Activated CD4-positive, alpha-beta memory T cell treated with anti-CD3 and anti-CD28 coated beads, Interleukin-2, amount 10 ng/mL, durations not matched to agents 7 days and 5 days (primary cell): ENCODE measurements at regions of chr18 and their contacts with region 1.

Region 1: DNA sequence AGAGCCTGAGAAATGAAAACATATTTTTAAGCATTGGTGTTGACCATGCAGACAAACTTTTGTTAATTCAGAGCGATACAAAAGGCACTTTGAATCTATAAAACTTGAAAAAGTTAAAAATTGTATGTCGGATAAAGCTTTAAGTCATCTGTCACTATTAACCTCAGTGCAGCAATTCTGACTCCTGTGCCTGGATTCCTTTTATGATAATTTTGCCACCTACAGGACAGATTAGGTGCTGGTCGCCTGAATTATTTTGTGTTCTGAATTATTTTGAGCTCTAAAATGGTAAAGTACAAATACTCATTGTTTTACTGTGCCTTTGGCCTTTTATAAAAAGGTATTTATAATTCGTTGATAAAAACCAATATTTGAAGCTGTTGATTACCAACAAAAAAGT is 19.4 kb upstream of the RNF138 start:
- DNase-seq: no peak
- H3K4me3 Mint-ChIP-seq: no peak overlapping the region
- H3K27ac Mint-ChIP-seq: no peak overlapping the region
- H3K4me1 Mint-ChIP-seq: peaks cover 22% of the 10 kb centered on the region
- H3K27me3 Mint-ChIP-seq: no peaks in the 10 kb centered on the region

Region 2: DNA sequence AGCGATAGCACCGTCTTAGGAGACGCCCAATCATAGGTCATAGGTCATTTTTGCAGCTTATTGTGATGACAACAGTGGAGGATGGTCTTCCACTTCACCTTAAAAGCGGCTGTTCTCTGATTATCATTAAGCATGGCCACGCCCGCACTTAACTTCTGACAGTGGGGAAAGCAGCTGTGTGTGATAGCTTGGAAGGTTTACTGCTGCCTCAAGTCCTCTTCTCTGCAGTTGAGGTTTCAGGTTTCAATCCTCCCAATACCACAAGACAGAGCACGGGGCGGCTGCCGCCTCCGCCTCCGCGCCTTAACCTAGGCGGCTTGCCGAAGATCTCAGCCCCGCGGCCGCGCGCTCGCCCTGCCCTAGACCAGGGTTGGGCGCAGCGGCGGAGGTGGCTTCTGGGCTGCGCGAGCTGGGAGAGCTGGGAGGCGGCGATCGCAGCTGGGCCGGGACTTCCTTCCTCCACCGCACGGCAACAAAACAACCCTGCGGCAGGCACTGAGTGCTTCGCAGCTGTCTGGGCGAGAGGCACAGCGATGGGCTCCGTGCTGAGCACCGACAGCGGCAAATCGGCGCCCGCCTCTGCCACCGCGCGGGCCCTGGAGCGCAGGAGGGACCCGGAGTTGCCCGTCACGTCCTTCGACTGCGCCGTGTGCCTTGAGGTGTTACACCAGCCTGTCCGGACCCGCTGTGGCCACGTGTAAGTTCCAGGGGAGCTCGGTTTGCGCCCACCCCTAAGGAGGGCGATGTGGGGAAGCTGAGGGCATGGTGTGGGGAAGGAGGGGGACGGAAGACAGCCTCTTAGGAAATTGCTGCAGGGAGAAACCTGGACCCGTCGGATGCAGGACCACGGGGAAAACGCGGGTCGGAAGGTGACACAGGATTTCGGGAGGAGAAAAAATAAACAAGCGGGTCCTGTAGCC is 53.7 kb before region 1 on chr18 and contains the start of gene RNF125:
- CTCF ChIA-PET with region 1: interaction called, 42 read pairs
- POLR2A ChIA-PET with region 1: interaction called, 43 read pairs
- DNase-seq: peak; percentile 94
- H3K4me3 Mint-ChIP-seq: peak within 1 kb of the TSS; percentile 90
- H3K27ac Mint-ChIP-seq: peak within 1 kb of the TSS; percentile 99
- H3K4me1 Mint-ChIP-seq: peaks cover 53% of the 10 kb centered on the region
- H3K27me3 Mint-ChIP-seq: no peaks in the 10 kb centered on the region
- total RNA-seq, gene RNF125: 43.8 to 48.4 TPM

Region 3: DNA sequence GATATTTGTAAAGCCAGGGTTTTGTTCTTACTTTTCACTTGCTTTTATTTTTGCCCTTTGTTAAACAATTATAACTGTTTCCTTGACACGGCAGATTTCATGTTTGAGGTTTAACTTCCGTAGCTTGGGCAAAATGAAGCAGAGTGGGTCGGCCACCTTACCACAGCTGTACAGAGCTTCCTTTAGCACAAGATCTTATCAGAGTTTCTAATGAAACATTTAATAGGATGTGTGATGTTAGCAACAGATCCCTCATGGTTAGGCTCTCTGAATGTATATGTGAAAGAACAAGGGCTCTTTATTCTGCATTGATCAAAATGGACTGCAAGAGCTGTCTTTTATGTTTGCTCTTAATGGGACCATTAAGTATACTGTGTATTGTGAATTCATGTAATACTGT is 31.4 kb before region 1 on chr18:
- CTCF ChIA-PET with region 1: interaction called, 10 read pairs
- POLR2A ChIA-PET with region 1: interaction called, 6 read pairs
- DNase-seq: peak; percentile 79
- H3K4me3 Mint-ChIP-seq: peak overlapping the region; percentile 55
- H3K27ac Mint-ChIP-seq: peak overlapping the region; percentile 96
- H3K4me1 Mint-ChIP-seq: peaks cover 67% of the 10 kb centered on the region
- H3K27me3 Mint-ChIP-seq: no peaks in the 10 kb centered on the region

Region 4: GRCh38 chr18:32060026-32060425 is 12.3 kb before region 1 on chr18:
- CTCF ChIA-PET with region 1: interaction called, 19 read pairs
- POLR2A ChIA-PET with region 1: interaction called, 5 read pairs
- DNase-seq: no peak
- H3K4me3 Mint-ChIP-seq: no peak overlapping the region
- H3K27ac Mint-ChIP-seq: no peak overlapping the region
- H3K4me1 Mint-ChIP-seq: peaks cover 40% of the 10 kb centered on the region
- H3K27me3 Mint-ChIP-seq: no peaks in the 10 kb centered on the region

Region 5: DNA sequence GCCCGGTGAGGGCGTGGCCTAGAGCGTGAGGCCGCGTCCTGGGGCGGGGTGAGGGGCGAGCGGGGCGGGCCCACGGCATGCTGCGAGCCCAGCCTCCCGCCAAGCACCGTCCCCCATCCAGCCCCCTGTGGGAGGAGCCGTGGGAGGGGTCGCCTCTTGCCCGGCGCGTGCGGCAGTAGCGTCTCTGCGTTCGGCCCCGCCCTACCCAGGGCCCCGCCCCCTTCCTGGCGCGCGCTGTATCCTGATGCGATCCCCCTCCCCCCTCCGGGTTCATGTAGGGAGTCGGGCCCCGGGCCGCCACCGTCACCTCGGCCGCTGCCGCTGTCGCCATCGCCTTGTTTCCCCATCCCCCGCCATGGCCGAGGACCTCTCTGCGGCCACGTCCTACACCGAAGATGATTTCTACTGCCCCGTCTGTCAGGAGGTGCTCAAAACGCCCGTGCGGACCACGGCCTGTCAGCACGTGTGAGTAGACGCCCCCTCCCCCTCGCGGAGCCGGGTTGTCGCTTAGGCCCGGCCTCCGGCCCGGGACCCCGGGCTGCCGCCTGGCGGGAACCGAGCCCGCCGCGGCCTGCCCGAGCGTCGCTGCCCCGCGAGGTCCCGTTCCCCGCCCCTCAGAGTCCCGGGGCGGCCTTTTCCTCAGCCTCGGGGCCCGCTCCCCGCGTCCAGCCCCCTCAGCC is 20.2 kb after region 1 on chr18:
- CTCF ChIA-PET with region 1: interaction called, 36 read pairs
- POLR2A ChIA-PET with region 1: interaction called, 12 read pairs
- DNase-seq: peak; percentile 99
- H3K4me3 Mint-ChIP-seq: peak overlapping the region; percentile 96
- H3K27ac Mint-ChIP-seq: peak overlapping the region; percentile 97
- H3K4me1 Mint-ChIP-seq: peaks cover 47% of the 10 kb centered on the region
- H3K27me3 Mint-ChIP-seq: no peaks in the 10 kb centered on the region

Region 6: GRCh38 chr18:32373995-32374394 is 301.7 kb after region 1 on chr18:
- CTCF ChIA-PET with region 1: no interaction called
- POLR2A ChIA-PET with region 1: no interaction called
- DNase-seq: no peak
- H3K4me3 Mint-ChIP-seq: no peak overlapping the region
- H3K27ac Mint-ChIP-seq: no peak overlapping the region
- H3K4me1 Mint-ChIP-seq: no peaks in the 10 kb centered on the region
- H3K27me3 Mint-ChIP-seq: no peaks in the 10 kb centered on the region